Sigmoid colon (tissue), 7 donors: ENCODE measurements at regions of chr3 and their contacts with region 1.

Region 1: GRCh38 chr3:133384331-133385027 is 15.4 kb upstream of the BFSP2 start:
- DNase-seq: no peak
- H3K4me3 ChIP-seq: no peak overlapping the region
- H3K27ac ChIP-seq: no peak overlapping the region
- H3K4me1 ChIP-seq: peaks cover 0 to 6% (median 2%) of the 10 kb centered on the region in 4 donors
- H3K27me3 ChIP-seq: no peaks in the 10 kb centered on the region
- CTCF ChIP-seq: peak in 3 of 4 experiments; percentile 13 to 62 (median 23)
- EP300 ChIP-seq: no peak
- POLR2A ChIP-seq: no peak

Region 2: GRCh38 chr3:133040696-133041523 is 343.6 kb before region 1 on chr3:
- intact Hi-C with region 1: loop called (anchors 2 kb)
- DNase-seq: peak; percentile 75
- H3K4me3 ChIP-seq: no peak overlapping the region
- H3K27ac ChIP-seq: peak overlapping the region in 1 of 4 donors; percentile 66
- H3K4me1 ChIP-seq: peaks cover 0 to 22% (median 20%) of the 10 kb centered on the region in 4 donors
- H3K27me3 ChIP-seq: peaks cover 0 to 29% (median 12%) of the 10 kb centered on the region in 3 donors
- CTCF ChIP-seq: peak; percentile 32 to 60 (median 48)
- EP300 ChIP-seq: no peak
- POLR2A ChIP-seq: no peak

Region 3: DNA sequence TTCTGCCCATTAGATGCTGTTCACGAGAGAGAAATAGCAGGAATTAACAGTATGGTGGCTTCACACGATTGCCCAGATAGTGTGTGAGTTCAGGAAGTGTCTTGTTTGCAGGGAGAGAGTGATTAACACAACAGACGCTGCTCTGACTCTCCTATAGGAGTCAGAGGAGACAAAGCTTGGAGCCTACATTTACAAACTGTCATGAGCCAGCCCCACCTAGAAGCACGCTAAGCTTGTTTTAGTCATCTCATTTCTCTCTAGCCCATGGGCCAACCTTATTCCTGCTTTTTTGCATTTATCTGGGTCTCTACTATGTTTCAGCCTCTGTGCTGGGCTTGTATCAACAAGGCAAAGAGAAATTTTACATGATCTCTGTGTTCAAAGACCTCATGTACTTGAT is 112.9 kb before region 1 on chr3:
- intact Hi-C with region 1: no loop called
- DNase-seq: no peak
- H3K4me3 ChIP-seq: no peak overlapping the region
- H3K27ac ChIP-seq: no peak overlapping the region
- H3K4me1 ChIP-seq: peaks cover 0 to 4% (median 0%) of the 10 kb centered on the region in 4 donors
- H3K27me3 ChIP-seq: no peaks in the 10 kb centered on the region
- CTCF ChIP-seq: no peak
- EP300 ChIP-seq: no peak
- POLR2A ChIP-seq: no peak